Dorsolateral prefrontal cortex (tissue), 120 donors: ENCODE measurements at regions of chr1 and their contacts with region 1.

Region 1: GRCh38 chr1:227437495-227438008 is 119.3 kb upstream of the CDC42BPA start:
- DNase-seq: no peak
- H3K4me3 ChIP-seq: peak overlapping the region; percentile 18 to 70 (median 54)
- H3K27ac ChIP-seq: peak overlapping the region in 32 of 59 donors; percentile 4 to 82 (median 56)
- H3K27me3 ChIP-seq: no peaks in the 10 kb centered on the region
- CTCF ChIP-seq: peak; percentile 12 to 82 (median 66)

Region 2: GRCh38 chr1:226642876-226643576 is 794.5 kb before region 1 on chr1:
- intact Hi-C with region 1: loop called in 1 of 2 experiments (anchors 5 kb)
- DNase-seq: peak in 5 of 10 donors; percentile 46 to 81 (median 65)
- H3K4me3 ChIP-seq: no peak overlapping the region
- H3K27ac ChIP-seq: peak overlapping the region in 51 of 59 donors; percentile 12 to 87 (median 72)
- H3K27me3 ChIP-seq: no peaks in the 10 kb centered on the region
- CTCF ChIP-seq: no peak

Region 3: GRCh38 chr1:226912587-226913176 is 524.9 kb before region 1 on chr1:
- intact Hi-C with region 1: loop called in 1 of 2 experiments (anchors 2 kb)
- DNase-seq: peak in 8 of 10 donors; percentile 27 to 82 (median 48)
- H3K4me3 ChIP-seq: no peak overlapping the region
- H3K27ac ChIP-seq: peak overlapping the region in 1 of 59 donors; percentile 19
- H3K27me3 ChIP-seq: no peaks in the 10 kb centered on the region
- CTCF ChIP-seq: peak in 55 of 56 donors; percentile 20 to 80 (median 59)

Region 4: GRCh38 chr1:226940029-226940805 is 497.3 kb before region 1 on chr1 and contains the start of gene COQ8A:
- intact Hi-C with region 1: loop called in 1 of 2 experiments (anchors 10 kb)
- DNase-seq: peak; percentile 98 to 100 (median 99)
- H3K4me3 ChIP-seq: peak within 1 kb of the TSS; percentile 63 to 100 (median 91)
- H3K27ac ChIP-seq: peak within 1 kb of the TSS; percentile 88 to 100 (median 99)
- H3K27me3 ChIP-seq: no peaks in the 10 kb centered on the region
- CTCF ChIP-seq: peak in 16 of 56 donors; percentile 4 to 41 (median 21)
- total RNA-seq, gene COQ8A: 27.2 to 59.8 (median 44.7) TPM

Region 5: DNA sequence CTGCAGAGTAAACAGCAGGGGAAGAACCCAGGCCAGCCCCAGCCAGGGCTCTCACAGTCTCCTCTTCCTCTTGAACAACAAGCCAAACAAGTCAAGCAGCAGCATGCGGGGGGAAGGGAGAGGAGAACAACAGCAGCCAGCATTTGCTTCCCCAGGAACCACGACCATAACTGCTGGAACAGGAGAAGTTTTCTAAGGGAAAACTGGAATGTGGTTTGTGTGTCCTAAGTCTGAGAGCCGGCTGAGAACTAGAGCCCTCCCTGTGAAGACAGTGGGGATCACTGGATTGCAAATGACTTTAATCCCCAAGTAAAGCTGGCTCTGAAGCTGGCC is 449.3 kb before region 1 on chr1:
- intact Hi-C with region 1: loop called (anchors 5 to 10 kb)
- DNase-seq: no peak
- H3K4me3 ChIP-seq: no peak overlapping the region
- H3K27ac ChIP-seq: peak overlapping the region in 57 of 59 donors; percentile 34 to 94 (median 87)
- H3K27me3 ChIP-seq: no peaks in the 10 kb centered on the region
- CTCF ChIP-seq: no peak

Region 6: DNA sequence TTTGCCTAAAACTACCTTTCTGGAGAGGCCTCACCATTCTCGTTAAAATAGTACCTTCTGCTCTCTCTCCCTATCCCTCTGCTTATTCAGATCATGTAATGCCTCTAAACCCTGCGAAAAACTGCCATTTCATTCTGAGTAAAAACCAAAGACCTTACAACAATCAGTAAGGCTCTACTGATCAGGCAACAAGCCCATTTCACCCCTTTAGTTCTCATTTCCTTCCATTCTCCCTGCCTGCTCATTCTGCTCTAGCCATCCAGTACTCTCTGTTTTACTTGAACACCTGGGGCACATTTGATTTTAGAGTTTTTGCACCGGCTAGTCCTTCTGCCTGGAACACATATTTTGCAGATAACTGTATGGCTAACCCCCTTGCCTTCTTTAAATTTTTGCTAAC is 309.7 kb before region 1 on chr1:
- intact Hi-C with region 1: loop called in 1 of 2 experiments (anchors 10 kb)
- DNase-seq: no peak
- H3K4me3 ChIP-seq: no peak overlapping the region
- H3K27ac ChIP-seq: peak overlapping the region in 35 of 59 donors; percentile 3 to 84 (median 57)
- H3K27me3 ChIP-seq: no peaks in the 10 kb centered on the region
- CTCF ChIP-seq: no peak

Region 7: DNA sequence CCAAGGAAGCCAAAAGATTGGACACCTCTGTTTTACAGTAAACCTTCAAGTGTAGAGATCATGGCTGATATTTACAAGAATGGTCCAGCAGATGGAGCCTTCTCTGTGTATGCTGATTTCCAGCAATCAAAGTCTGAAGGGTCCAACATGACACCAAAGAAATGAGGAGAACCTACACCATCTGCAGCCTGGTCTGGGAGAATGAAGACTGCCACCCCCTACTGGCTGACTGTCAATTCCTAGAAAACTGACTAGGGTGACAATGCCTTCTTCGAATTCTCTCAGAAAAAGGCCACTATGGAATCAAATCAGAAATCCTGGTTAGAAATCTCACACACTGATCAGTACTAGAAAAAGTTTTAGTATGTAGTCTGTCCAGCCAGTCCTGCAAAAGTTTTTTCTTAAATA is 202.6 kb before region 1 on chr1:
- intact Hi-C with region 1: loop called (anchors 2 to 5 kb)
- DNase-seq: no peak
- H3K4me3 ChIP-seq: no peak overlapping the region
- H3K27ac ChIP-seq: peak overlapping the region in 2 of 59 donors; percentile 1 to 14
- H3K27me3 ChIP-seq: no peaks in the 10 kb centered on the region
- CTCF ChIP-seq: peak in 55 of 56 donors; percentile 27 to 74 (median 56)

Region 8: DNA sequence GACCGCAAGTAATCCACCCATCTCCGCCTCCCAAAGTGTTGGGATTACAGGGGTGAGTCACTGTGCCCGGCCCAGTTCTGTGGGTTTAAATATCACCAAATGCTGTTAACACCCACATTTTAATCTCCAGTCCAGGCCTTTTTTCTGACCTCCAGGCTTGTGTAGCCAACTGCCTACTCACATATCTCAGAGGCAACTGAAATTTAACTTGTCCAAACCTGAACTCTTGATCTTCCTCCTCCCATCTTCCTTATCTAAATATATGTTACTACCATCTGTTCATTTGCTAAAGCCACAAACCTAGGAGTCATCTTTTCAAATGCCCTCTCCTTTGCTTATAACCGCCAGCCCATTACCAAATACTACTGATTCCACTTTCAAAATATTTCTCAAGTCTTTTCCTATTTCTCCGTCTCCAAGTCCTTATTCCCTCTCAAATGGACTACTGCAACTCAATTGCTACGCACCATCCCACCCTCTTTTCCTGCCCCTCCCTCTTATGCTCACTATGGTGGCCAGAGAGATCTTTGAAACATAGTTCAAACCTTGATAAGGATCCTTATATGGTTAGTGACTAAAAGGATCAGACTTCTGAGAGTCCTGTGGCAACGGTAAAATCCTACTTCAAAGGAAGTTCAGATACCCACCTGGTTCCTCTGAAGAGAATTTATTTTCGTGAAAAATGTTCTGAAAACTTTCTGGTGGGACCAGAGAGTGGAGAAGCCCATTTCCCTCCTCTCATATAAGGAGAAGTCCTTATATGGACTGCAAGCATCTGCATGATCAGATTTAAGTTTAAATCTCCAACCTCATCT is 40.8 kb before region 1 on chr1:
- intact Hi-C with region 1: no loop called
- DNase-seq: no peak
- H3K4me3 ChIP-seq: no peak overlapping the region
- H3K27ac ChIP-seq: no peak overlapping the region
- H3K27me3 ChIP-seq: no peaks in the 10 kb centered on the region
- CTCF ChIP-seq: no peak

Region 9: DNA sequence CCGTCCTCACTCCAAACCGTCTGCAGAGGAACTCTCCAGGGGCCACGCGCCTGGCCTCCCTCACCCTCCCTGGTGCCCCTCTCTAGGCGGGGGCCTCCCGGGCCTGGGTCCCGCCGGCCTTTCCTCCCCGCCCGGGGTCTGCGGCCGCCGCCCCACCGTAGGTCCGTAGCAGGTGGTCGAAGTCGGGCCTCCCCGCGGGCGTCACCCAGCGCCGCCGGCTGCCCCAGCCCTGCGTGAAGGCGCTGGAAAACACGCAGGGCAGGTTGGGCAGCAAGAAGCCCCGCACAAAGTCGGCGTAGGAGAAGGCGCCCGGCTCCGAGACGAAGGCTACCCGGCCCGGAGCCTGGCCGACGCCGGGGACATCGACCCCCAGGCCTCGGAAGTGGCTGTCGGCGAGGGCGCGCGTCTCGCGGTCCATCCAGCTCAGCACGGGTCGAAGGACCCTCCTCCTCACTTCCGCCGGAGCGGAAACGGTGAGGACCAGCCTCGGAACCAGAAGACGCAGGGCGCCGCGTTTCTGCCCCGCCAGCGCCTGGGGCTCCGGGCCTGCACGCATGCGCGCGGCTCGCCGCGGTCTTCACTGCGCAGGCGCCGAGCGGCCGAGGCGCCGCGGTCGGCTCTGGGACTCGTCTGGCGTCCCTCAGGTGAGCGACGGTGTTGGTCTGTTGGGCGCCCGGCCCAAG is 297.4 kb after region 1 on chr1 and contains the starts of genes JMJD4 and SNAP47:
- intact Hi-C with region 1: no loop called
- DNase-seq: peak; percentile 78 to 92 (median 88)
- H3K4me3 ChIP-seq: peak within 1 kb of the TSS; percentile 74 to 100 (median 93)
- H3K27ac ChIP-seq: peak within 1 kb of the TSS; percentile 29 to 97 (median 81)
- H3K27me3 ChIP-seq: no peaks in the 10 kb centered on the region
- CTCF ChIP-seq: peak in 36 of 56 donors; percentile 10 to 64 (median 34)
- total RNA-seq, gene JMJD4: 7.0 to 20.5 (median 13.3) TPM
- total RNA-seq, gene SNAP47: 39.7 to 102 (median 75.0) TPM

Region 10: DNA sequence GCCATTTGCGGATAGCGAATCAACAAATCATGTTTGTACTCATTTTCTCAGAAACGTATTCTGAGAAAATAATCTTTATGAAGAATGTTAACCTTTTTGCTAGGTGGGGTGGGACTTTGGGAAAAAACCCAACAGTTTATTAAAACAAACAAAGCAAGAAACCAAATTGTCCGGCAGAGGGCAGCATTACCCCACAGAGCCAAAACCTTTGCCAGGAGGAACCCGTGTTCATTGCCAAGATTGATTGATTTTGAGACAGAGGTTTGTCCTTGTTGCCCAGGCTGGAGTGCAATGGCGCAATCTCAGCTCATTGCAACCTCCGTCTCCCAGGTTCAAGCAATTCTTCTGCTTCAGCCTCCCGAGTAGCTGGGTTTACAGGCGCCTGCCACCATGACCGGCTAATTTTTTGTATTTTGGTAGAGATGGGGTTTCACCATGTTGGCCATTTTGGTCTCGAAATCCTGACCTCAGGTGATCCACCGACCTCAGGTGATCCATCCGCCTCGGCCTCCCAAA is 1226.9 kb after region 1 on chr1:
- intact Hi-C with region 1: no loop called
- DNase-seq: peak; percentile 50 to 88 (median 67)
- H3K4me3 ChIP-seq: peak overlapping the region in 4 of 59 donors; percentile 16 to 21 (median 19)
- H3K27ac ChIP-seq: peak overlapping the region in 2 of 59 donors; percentile 4 to 41
- H3K27me3 ChIP-seq: no peaks in the 10 kb centered on the region
- CTCF ChIP-seq: peak; percentile 73 to 96 (median 88)